ENCODE measurements at regions of chr3 and their contacts with region 1.

Region 1: DNA sequence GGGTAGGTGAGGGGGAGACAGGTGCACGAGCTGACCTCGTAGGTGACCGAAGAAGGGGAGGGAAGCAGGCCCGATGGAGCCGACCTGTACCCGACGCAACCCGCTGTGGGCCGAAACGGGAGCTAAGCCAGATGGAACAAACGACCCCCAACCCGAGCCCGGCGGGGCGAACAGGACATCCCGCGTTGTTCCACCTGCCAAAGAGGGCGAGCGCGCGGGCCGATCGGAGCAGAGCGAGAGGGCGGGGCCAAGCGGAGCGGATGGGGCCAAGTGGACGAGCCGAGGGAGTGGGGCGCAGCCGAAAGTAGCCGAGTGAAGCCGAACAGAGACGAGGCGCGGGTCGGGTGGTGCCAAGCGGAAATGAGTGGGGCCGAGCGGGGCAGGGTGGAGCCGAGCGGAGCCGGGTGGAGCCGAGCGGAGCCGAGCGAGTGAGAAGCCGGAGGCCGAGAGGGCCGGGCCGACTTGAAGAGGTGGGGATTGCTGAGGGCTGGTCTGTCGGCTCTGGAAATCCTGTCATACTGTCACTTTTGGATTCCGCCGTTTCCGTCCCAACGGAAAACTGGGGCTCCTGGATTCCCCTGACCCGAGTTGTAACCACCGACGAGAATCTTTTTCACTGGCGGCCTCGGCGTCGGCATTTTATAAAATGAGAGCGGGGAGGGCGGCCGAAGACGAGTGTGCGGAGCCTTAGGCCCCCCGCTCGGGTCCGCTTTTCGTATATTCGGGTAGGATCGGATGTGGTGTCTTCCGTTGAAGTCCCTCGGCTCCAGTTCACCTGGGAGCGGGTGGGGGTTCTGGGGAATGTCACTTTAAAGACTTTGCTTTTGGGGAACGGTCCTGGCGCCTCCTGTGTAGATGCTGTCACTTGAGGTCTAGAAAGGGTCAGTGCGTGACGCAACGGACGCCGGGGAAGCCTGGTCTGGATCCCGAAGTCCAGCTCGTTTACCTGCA is 15.6 kb upstream of the WNT7A start:
- DNase-seq: peak; percentile 90 to 97 (median 94)
- ATAC-seq: peak; percentile 95
- H3K4me3 ChIP-seq: peak overlapping the region; percentile 72
- H3K4me3 Mint-ChIP-seq: peak overlapping the region; percentile 83
- H3K27ac ChIP-seq: peak overlapping the region; percentile 58 to 65
- H3K27ac Mint-ChIP-seq: peak overlapping the region; percentile 37
- H3K4me1 ChIP-seq: peaks cover 48% of the 10 kb centered on the region
- H3K4me1 Mint-ChIP-seq: peaks cover 43% of the 10 kb centered on the region
- H3K27me3 ChIP-seq: no peaks in the 10 kb centered on the region
- H3K27me3 Mint-ChIP-seq: no peaks in the 10 kb centered on the region
- CTCF ChIP-seq: no peak

Region 2: DNA sequence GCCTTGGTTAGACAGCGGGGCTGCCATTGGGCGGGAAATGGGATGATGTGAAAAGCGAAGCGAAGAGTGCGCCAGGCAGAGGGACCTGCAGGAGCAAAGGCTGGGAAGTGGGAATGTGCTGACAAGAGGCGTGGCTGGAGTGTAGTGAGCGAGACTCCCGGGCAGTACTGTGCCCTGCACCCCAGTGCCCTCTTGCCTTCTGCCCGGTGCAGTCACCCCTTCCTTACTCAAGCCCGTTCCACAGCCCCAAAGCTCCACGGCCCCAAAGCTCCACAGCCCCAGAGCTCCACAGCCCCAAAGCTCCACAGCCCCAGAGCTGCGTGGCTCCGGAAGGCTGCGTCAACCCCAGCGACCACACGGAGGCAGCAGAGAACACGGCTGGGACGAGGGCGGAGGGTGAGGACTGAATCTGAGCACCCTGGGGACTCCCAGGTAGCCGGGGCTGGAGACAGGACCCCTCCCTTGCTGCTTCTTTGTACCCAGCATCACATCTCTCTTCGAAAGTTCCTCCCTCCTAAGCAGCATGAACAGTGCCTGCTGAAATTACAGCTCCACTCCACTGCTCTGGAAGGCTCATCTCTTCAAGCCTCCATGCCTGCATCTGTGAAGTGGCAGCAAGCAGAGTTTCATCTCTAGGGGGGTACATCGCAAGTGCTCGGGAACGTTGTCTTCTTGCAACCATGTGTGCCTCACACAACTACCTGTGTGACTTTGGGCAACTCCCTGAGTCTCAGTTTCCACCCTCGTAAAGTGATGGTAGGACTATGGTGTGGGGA is 237.6 kb before region 1 on chr3:
- CTCF ChIA-PET with region 1: interaction called, 8 read pairs
- POLR2A ChIA-PET with region 1: interaction called, 14 read pairs
- intact Hi-C with region 1: no loop called
- DNase-seq: peak; percentile 56 to 87 (median 68)
- ATAC-seq: peak; percentile 87
- H3K4me3 ChIP-seq: no peak overlapping the region
- H3K4me3 Mint-ChIP-seq: no peak overlapping the region
- H3K27ac ChIP-seq: no peak overlapping the region
- H3K27ac Mint-ChIP-seq: no peak overlapping the region
- H3K4me1 ChIP-seq: peaks cover 39% of the 10 kb centered on the region
- H3K4me1 Mint-ChIP-seq: peaks cover 28% of the 10 kb centered on the region
- H3K27me3 ChIP-seq: peaks cover 2 to 4% of the 10 kb centered on the region in 2 experiments
- H3K27me3 Mint-ChIP-seq: peaks cover 7% of the 10 kb centered on the region
- CTCF ChIP-seq: peak; percentile 76

Region 3: GRCh38 chr3:13762906-13763305 is 132.5 kb before region 1 on chr3:
- CTCF ChIA-PET with region 1: no interaction called
- POLR2A ChIA-PET with region 1: no interaction called
- intact Hi-C with region 1: no loop called
- DNase-seq: no peak
- ATAC-seq: no peak
- H3K4me3 ChIP-seq: no peak overlapping the region
- H3K4me3 Mint-ChIP-seq: no peak overlapping the region
- H3K27ac ChIP-seq: no peak overlapping the region
- H3K27ac Mint-ChIP-seq: no peak overlapping the region
- H3K4me1 ChIP-seq: no peaks in the 10 kb centered on the region
- H3K4me1 Mint-ChIP-seq: no peaks in the 10 kb centered on the region
- H3K27me3 ChIP-seq: no peaks in the 10 kb centered on the region
- H3K27me3 Mint-ChIP-seq: peaks cover 6% of the 10 kb centered on the region
- CTCF ChIP-seq: no peak

Region 4: GRCh38 chr3:13852638-13853009 is 42.8 kb before region 1 on chr3:
- CTCF ChIA-PET with region 1: no interaction called
- POLR2A ChIA-PET with region 1: no interaction called
- intact Hi-C with region 1: no loop called
- DNase-seq: peak in 1 of 14 experiments; percentile 25
- ATAC-seq: no peak
- H3K4me3 ChIP-seq: no peak overlapping the region
- H3K4me3 Mint-ChIP-seq: no peak overlapping the region
- H3K27ac ChIP-seq: no peak overlapping the region
- H3K27ac Mint-ChIP-seq: no peak overlapping the region
- H3K4me1 ChIP-seq: peaks cover 47% of the 10 kb centered on the region
- H3K4me1 Mint-ChIP-seq: peaks cover 36% of the 10 kb centered on the region
- H3K27me3 ChIP-seq: no peaks in the 10 kb centered on the region
- H3K27me3 Mint-ChIP-seq: no peaks in the 10 kb centered on the region
- CTCF ChIP-seq: no peak

Region 5: GRCh38 chr3:14124615-14125190 is 229.3 kb after region 1 on chr3 and contains the starts of genes CHCHD4 and TMEM43:
- CTCF ChIA-PET with region 1: interaction called, 14 read pairs
- POLR2A ChIA-PET with region 1: interaction called, 10 read pairs
- intact Hi-C with region 1: loop called (anchors 1 to 5 kb)
- DNase-seq: peak; percentile 94 to 100 (median 98)
- ATAC-seq: peak; percentile 89
- H3K4me3 ChIP-seq: peak within 1 kb of the TSS; percentile 96
- H3K4me3 Mint-ChIP-seq: peak within 1 kb of the TSS; percentile 97
- H3K27ac ChIP-seq: peak within 1 kb of the TSS; percentile 76 to 86
- H3K27ac Mint-ChIP-seq: peak within 1 kb of the TSS; percentile 91
- H3K4me1 ChIP-seq: peaks cover 53% of the 10 kb centered on the region
- H3K4me1 Mint-ChIP-seq: peaks cover 73% of the 10 kb centered on the region
- H3K27me3 ChIP-seq: no peaks in the 10 kb centered on the region
- H3K27me3 Mint-ChIP-seq: no peaks in the 10 kb centered on the region
- CTCF ChIP-seq: no peak
- total RNA-seq, gene CHCHD4: 0.50 to 1.1 TPM
- total RNA-seq, gene TMEM43: 24.8 to 27.6 TPM

Region 6: GRCh38 chr3:14203521-14204079 is 308.2 kb after region 1 on chr3:
- CTCF ChIA-PET with region 1: no interaction called
- POLR2A ChIA-PET with region 1: no interaction called
- intact Hi-C with region 1: loop called in 1 of 2 experiments (anchors 1 kb)
- DNase-seq: peak in 13 of 14 experiments; percentile 10 to 74 (median 26)
- ATAC-seq: peak; percentile 64
- H3K4me3 ChIP-seq: no peak overlapping the region
- H3K4me3 Mint-ChIP-seq: no peak overlapping the region
- H3K27ac ChIP-seq: no peak overlapping the region
- H3K27ac Mint-ChIP-seq: no peak overlapping the region
- H3K4me1 ChIP-seq: peaks cover 3% of the 10 kb centered on the region
- H3K4me1 Mint-ChIP-seq: no peaks in the 10 kb centered on the region
- H3K27me3 ChIP-seq: no peaks in the 10 kb centered on the region
- H3K27me3 Mint-ChIP-seq: no peaks in the 10 kb centered on the region
- CTCF ChIP-seq: peak; percentile 77

Region 7: DNA sequence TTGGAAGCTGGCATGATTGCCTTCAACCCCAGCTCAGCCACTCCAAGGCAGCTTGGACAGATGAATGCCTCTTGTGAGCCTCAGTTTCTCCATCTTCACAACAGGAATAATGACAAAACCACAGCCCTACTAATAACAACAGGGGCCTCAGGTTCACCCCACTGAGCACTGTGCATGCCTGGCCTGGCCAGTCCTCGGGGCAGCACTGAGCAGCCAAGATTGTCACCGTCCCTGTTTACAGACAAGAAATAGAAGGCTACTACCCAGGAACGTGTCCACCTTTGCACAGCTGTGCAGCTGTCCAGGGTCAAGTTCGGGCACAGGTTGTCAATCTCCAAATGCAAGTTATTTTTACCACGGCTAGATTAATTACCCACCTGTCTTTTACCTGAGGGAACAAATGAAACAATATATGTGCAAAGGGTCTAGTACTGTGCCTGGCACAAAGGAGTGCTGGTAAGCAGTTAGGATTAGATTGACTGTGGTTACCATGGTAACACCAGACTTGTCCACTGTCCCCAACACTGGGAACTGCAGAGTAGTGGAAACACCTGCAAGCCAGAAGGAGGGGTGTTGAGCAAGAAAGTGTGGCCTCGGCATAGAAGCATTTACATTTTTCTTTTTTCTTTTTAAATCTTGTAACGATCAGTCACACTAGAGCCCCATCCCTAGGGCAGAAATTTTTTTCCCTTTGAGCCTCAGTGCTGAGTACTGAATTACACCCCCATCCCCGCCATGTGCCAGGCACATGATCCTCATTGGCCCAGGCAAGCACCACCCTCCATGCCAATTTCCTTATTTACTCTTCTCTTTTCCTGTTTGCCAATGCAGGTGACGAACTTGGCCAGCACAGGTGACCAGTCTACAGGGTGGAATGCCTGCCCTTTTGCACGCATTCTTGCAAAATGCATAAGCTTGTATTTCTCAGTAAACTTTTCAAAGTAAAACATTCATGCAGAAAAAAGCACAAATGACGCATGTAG is 440.6 kb after region 1 on chr3:
- CTCF ChIA-PET with region 1: no interaction called
- POLR2A ChIA-PET with region 1: no interaction called
- intact Hi-C with region 1: no loop called
- DNase-seq: no peak
- ATAC-seq: no peak
- H3K4me3 ChIP-seq: no peak overlapping the region
- H3K4me3 Mint-ChIP-seq: no peak overlapping the region
- H3K27ac ChIP-seq: no peak overlapping the region
- H3K27ac Mint-ChIP-seq: no peak overlapping the region
- H3K4me1 ChIP-seq: no peaks in the 10 kb centered on the region
- H3K4me1 Mint-ChIP-seq: no peaks in the 10 kb centered on the region
- H3K27me3 ChIP-seq: no peaks in the 10 kb centered on the region
- H3K27me3 Mint-ChIP-seq: no peaks in the 10 kb centered on the region
- CTCF ChIP-seq: no peak

Region 8: DNA sequence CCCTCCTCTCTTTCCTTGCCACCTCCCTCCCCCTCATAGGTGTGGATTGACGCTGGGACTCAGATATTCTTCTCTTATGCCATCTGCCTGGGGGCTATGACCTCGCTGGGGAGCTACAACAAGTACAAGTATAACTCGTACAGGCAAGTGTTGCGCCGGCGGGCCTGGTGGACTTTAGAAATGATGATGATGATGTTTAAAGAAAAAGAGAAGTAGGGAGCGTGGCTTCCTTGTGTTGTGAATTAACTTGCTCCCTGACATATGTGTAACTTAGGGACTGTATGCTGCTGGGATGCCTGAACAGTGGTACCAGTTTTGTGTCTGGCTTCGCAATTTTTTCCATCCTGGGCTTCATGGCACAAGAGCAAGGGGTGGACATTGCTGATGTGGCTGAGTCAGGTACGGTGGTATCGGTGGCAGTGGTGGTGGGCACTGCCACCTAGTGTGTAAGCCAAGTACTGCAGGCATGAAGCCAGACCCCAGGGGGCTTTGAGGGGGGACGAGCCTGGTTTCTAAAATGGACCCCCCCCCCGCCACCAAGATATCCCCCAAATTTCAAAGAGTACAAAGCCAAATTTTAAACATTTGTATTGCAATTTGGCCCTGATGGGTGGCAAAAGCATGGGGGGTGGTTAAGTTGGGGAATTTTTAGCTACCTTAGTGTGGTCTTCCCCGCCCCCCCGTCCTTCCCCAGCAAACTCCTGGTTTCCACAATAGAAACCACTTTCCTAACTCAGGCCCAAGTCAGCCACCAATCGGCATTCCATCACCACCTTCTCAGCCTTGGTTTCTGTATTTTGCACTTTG is 572.6 kb after region 1 on chr3:
- CTCF ChIA-PET with region 1: interaction called, 7 read pairs
- POLR2A ChIA-PET with region 1: no interaction called
- intact Hi-C with region 1: loop called in 1 of 2 experiments (anchors 2 kb)
- DNase-seq: peak; percentile 24 to 72 (median 40)
- ATAC-seq: peak; percentile 79
- H3K4me3 ChIP-seq: no peak overlapping the region
- H3K4me3 Mint-ChIP-seq: no peak overlapping the region
- H3K27ac ChIP-seq: no peak overlapping the region
- H3K27ac Mint-ChIP-seq: no peak overlapping the region
- H3K4me1 ChIP-seq: no peaks in the 10 kb centered on the region
- H3K4me1 Mint-ChIP-seq: no peaks in the 10 kb centered on the region
- H3K27me3 ChIP-seq: no peaks in the 10 kb centered on the region
- H3K27me3 Mint-ChIP-seq: no peaks in the 10 kb centered on the region
- CTCF ChIP-seq: peak; percentile 89

Region 9: DNA sequence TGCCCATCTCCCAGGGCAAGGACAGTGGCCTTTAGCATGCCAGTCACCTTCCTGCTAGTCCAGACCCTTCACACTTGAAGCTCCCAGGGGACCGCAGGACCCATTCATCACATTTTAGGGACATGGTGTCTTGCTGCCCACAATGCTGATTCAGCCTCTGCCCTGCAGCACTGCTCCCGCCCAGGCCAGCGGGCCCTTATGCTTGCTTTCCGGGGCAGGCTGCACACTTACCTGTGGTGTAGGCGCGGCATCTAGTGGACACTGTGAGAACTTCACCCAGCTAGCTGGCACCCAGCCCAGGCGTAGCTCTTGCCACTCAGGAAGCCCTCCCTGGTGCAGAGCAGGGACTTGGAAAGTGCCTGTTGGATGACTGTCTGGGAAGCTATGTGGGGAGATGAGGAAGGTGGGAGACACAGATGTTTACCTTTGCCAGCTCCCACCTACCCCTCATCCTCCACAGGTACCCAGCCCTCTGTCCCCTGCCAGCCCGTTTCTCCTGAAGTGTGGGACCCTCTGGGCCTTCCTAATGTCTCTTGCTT is 1025.7 kb after region 1 on chr3:
- CTCF ChIA-PET with region 1: interaction called, 3 read pairs
- POLR2A ChIA-PET with region 1: no interaction called
- intact Hi-C with region 1: loop called in 1 of 2 experiments (anchors 5 kb)
- DNase-seq: peak; percentile 67 to 89 (median 80)
- ATAC-seq: peak; percentile 98
- H3K4me3 ChIP-seq: no peak overlapping the region
- H3K4me3 Mint-ChIP-seq: no peak overlapping the region
- H3K27ac ChIP-seq: no peak overlapping the region
- H3K27ac Mint-ChIP-seq: no peak overlapping the region
- H3K4me1 ChIP-seq: peaks cover 7% of the 10 kb centered on the region
- H3K4me1 Mint-ChIP-seq: no peaks in the 10 kb centered on the region
- H3K27me3 ChIP-seq: no peaks in the 10 kb centered on the region
- H3K27me3 Mint-ChIP-seq: no peaks in the 10 kb centered on the region
- CTCF ChIP-seq: peak; percentile 96